AG04450 (cell line): ENCODE measurements at regions of chr12 and their contacts with region 1.

Region 1: GRCh38 chr12:82685790-82686167 is 927 bp upstream of the TMTC2 start:
- DNase-seq: peak; percentile 71
- H3K4me3 ChIP-seq: peak overlapping the region; percentile 91
- H3K27ac ChIP-seq: no peak overlapping the region
- H3K27me3 ChIP-seq: no peaks in the 10 kb centered on the region
- CTCF ChIP-seq: peak; percentile 81

Region 2: GRCh38 chr12:82565966-82566365 is 119.8 kb before region 1 on chr12:
- CTCF ChIA-PET with region 1: no interaction called
- POLR2A ChIA-PET with region 1: no interaction called
- DNase-seq: no peak
- H3K4me3 ChIP-seq: no peak overlapping the region
- H3K27ac ChIP-seq: no peak overlapping the region
- H3K27me3 ChIP-seq: no peaks in the 10 kb centered on the region
- CTCF ChIP-seq: no peak

Region 3: GRCh38 chr12:82675246-82675645 is 10.5 kb before region 1 on chr12:
- CTCF ChIA-PET with region 1: interaction called, 20 read pairs
- POLR2A ChIA-PET with region 1: no interaction called
- DNase-seq: no peak
- H3K4me3 ChIP-seq: no peak overlapping the region
- H3K27ac ChIP-seq: no peak overlapping the region
- H3K27me3 ChIP-seq: no peaks in the 10 kb centered on the region
- CTCF ChIP-seq: no peak

Region 4: DNA sequence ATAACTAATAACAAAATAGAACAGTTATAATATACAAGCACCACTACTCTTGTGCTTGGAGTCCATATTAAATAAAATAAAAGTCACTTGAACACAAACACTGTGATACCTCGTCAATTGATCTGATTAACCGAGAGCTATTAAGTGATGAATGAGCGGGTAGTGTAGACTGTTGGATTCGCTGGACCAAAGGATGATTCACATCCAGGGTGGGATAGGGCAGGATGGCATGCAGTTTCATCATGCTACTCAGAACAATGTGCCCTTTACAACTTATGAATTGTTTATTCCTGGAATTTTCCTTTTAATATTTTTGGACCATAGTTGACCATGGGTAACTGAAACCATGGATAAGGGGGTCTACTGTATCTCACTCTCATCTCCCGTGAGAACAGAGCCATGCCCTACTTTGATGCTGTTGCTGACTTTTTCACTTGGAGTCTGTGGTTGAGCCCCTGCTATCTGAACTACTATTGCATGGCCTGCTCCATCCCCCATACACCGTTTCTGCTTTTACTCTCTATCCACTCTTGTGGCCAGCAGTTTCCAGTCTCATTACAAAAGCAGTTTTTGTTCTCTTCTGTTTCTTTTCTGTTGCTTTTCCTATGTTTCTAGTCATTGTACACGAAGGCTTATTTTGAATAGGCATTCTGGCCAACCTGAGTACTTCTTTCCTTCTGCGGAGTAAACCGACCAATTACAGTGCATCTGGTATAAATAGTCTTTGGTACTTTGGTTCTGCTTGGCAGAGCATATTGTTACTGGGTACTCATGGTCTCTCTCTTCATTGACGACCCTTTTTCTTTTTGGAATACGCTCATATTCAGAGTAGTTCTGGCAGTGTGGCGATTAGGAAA is 13.2 kb after region 1 on chr12:
- CTCF ChIA-PET with region 1: interaction called, 21 read pairs
- POLR2A ChIA-PET with region 1: no interaction called
- DNase-seq: no peak
- H3K4me3 ChIP-seq: no peak overlapping the region
- H3K27ac ChIP-seq: no peak overlapping the region
- H3K27me3 ChIP-seq: no peaks in the 10 kb centered on the region
- CTCF ChIP-seq: no peak

Region 5: DNA sequence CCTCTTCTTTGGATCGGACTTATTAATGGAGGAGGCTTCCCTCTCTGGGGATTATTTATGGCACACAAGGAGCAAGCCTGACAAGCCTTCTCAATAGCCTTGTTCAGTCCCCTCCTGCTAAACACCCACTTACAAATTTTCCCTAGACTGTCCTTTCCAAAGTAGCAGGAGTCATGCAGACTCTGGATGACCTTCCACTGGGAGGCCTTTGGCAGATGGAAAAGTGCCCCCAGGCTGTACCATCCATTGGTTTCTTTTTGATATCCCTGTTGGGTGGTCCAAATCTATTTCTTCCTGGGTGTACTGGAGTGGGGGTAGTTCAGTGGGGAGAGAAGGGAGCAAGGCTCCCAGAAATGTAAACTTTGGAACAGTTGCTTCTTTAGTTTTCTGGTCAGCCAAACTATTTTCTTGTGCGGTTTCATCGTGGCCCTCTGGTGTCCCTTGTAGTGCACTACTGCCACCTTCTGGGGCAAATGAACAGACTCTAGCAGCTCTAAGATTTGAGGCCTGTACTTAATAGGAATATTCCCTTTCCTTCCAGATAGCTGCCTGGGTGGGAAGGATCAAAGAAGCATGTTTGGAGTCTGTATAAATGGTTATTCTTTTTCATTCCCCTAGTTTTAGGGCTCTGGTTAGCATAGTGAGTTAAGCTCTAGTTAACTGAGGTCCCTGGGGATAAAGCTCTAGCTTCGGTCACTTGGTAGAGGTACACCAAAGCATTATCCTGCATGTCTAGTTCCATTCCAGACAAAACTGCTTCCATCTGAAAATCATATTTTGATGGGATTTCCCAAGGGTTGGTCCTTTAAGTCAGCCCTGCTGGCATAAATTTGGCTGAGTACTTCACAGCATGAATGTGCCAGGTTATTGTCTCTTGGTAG is 1817.4 kb after region 1 on chr12:
- CTCF ChIA-PET with region 1: interaction called, 33 read pairs
- POLR2A ChIA-PET with region 1: no interaction called
- DNase-seq: peak; percentile 55
- H3K4me3 ChIP-seq: no peak overlapping the region
- H3K27ac ChIP-seq: no peak overlapping the region
- H3K27me3 ChIP-seq: no peaks in the 10 kb centered on the region
- CTCF ChIP-seq: peak; percentile 91